AG04450 (cell line): ENCODE measurements at regions of chr6 and their contacts with region 1.

Region 1: DNA sequence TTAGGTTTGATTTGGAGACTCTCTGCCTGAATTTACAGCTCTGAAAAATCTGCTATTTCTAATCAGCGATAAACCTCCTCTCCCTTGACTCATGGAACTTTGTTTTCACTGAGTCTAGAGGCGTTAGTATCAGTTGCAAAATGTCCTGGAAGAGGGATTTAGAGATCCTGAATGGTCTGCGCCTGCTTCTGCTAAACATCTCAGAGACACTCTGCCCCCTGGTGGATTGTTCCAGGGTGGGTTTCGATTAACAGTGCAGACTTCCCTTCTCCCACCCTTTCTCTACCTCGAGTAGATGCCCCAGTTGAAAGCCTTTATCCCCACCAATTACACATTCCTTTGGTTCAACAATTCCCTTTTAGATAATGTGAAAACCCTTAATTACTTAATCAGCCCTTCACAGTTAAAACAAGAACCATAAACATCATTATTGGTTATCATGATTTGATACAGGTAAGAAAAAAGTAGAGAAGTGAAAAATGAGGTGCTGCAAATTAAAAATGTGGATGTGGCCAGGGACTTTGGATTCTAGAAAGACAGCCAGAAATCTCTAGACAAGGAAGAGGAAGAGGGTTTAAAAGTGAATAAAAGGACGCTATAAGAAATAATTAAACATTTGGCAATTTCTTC is 5.5 kb downstream of the HTR1B start:
- DNase-seq: peak; percentile 90
- H3K4me3 ChIP-seq: no peak overlapping the region
- H3K27ac ChIP-seq: no peak overlapping the region
- H3K27me3 ChIP-seq: peaks cover 7% of the 10 kb centered on the region
- CTCF ChIP-seq: peak; percentile 85

Region 2: DNA sequence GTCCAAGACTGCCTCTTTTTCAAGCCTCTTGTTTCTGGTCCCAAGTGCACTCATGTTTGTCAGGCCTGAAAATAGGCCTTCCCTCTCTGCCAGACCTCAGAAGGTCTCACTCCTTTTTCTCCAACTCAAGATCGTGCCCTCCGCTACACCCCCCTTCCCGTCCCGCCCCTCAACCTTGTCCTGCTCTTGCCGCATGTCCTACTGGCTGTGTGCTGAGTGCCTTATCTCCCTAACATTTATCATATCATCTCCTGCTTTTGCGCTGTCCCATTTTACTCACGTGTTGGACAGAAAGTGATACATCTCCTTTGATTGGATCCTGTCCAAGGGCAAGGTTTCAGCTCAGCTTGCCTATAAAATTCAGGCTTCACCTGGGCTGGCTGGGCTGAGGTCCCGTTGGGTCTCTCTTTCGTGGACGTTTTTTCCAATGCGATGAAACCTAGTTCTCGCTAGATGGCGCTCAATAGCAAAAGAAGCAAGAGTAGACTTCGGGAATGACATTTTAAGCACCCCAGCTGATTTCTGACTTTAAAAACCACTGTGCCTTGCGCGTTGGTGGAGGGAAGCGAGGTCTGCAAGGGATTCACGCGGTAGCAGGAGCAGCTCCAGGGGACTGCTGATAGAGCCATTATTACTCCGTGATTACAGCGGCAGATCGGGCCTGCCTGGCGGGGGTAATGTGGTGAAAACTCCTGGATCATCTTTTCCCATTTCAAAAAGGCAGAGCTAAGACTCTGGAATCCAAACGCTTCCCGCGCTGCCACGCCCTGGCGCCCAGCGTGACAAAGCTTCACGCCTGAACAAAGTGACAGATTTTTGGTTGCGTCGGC is 1523.0 kb before region 1 on chr6:
- CTCF ChIA-PET with region 1: interaction called, 17 read pairs
- POLR2A ChIA-PET with region 1: no interaction called
- DNase-seq: peak; percentile 55
- H3K4me3 ChIP-seq: peak overlapping the region; percentile 58
- H3K27ac ChIP-seq: no peak overlapping the region
- H3K27me3 ChIP-seq: peaks cover 10% of the 10 kb centered on the region
- CTCF ChIP-seq: peak; percentile 84

Region 3: GRCh38 chr6:76697585-76697984 is 760.2 kb before region 1 on chr6:
- CTCF ChIA-PET with region 1: interaction called, 12 read pairs
- POLR2A ChIA-PET with region 1: no interaction called
- DNase-seq: no peak
- H3K4me3 ChIP-seq: no peak overlapping the region
- H3K27ac ChIP-seq: no peak overlapping the region
- H3K27me3 ChIP-seq: no peaks in the 10 kb centered on the region
- CTCF ChIP-seq: peak; percentile 19; the same call in 1 of the 2 replicates

Region 4: GRCh38 chr6:77447254-77447653 is 10.6 kb before region 1 on chr6:
- CTCF ChIA-PET with region 1: interaction called, 21 read pairs
- POLR2A ChIA-PET with region 1: no interaction called
- DNase-seq: no peak
- H3K4me3 ChIP-seq: no peak overlapping the region
- H3K27ac ChIP-seq: no peak overlapping the region
- H3K27me3 ChIP-seq: no peaks in the 10 kb centered on the region
- CTCF ChIP-seq: no peak